ENCODE measurements at regions of chr14 and their contacts with region 1.

Region 1: DNA sequence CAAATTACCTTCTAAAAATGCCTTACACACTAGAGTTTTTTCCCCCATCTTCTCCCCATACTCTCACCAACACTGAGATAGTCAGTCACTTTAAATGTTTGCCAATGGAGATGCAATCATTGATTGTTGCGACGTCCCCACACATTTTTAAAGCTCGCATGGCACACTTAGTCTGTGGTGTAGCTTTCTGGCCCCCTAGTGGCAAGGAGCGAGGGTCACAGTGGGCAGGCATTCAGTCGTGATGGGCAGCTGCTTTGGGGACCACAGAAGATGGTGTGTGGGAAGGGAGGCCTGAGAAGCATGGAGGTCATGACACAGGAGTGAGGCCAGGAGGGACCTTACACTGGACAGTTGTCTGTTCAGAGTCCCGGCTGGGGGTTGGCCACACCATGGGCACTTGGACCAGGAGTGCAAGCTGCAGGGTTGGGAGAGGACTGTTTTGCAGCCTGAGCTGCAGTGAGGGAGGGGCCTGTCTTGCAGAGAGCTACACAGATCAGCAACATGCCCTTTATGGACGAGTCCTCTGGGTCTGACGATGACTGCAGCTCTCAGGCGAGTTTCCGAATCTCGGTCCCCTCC is 28.7 kb downstream of the PIGH start:
- DNase-seq: peak; percentile 81
- CTCF ChIP-seq: peak; percentile 97

Region 2: DNA sequence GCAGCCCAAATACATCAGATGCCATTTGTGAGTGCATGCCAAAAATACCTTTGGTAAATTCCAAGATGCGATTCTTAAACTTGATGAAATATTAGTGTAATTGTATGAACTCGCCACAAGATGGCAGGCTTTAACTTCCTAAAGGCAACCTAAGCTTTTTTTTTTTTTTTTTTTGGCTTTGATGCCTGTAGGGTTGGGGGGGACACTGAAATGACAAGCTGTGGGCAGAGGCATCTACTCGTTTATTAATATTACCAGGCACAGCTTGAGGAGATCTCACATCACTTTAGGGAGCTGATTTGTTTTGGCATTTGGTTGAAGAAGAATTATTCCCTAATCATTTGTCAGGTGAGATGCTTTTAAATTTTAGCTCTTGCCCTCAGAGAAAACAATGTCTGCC is 1211.9 kb before region 1 on chr14:
- CTCF ChIA-PET with region 1: interaction called, 12 read pairs
- POLR2A ChIA-PET with region 1: no interaction called
- DNase-seq: peak; percentile 40
- CTCF ChIP-seq: peak; percentile 47

Region 3: DNA sequence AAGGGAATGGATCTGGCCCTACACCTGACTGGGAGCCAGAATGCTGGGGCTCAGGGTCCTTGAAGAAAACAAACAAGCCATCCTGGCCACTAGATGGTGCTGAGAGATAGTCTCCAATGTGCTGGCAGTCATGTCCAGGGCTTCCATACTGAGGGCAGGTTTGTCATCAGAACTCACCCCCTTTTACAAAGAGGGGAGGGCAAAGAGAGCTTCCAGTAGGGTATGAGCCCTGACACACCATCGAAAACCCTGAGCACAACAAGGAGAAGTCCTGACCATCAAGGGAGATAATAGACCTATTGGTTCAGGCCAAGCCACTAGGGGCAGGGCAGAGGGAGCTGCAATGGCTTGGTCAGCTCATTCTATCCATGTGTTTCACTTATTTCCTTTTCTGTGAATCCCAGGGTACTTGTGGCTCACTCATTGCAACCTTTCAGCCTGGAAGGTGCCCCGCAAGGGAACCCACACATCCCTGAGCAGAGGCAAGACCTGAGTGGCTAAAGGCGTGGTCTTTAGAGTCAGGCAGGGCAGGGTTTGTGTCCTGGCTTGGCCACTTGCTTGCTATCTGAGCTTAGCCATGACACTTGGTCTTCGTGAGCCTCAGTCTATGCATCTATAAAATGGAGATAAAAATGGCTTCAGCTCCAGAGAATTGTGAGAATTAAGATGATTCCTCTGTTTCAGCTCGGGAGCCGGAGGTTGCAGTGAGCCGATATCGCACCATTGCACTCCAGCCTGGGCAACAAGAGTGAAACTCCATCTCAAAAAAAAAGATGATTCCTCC is 44.5 kb before region 1 on chr14:
- CTCF ChIA-PET with region 1: interaction called, 38 read pairs
- POLR2A ChIA-PET with region 1: no interaction called
- DNase-seq: peak; percentile 53
- CTCF ChIP-seq: peak; percentile 53

Region 4: GRCh38 chr14:67557126-67557525 is 14.2 kb before region 1 on chr14:
- CTCF ChIA-PET with region 1: interaction called, 40 read pairs
- POLR2A ChIA-PET with region 1: no interaction called
- DNase-seq: no peak
- CTCF ChIP-seq: no peak

Region 5: DNA sequence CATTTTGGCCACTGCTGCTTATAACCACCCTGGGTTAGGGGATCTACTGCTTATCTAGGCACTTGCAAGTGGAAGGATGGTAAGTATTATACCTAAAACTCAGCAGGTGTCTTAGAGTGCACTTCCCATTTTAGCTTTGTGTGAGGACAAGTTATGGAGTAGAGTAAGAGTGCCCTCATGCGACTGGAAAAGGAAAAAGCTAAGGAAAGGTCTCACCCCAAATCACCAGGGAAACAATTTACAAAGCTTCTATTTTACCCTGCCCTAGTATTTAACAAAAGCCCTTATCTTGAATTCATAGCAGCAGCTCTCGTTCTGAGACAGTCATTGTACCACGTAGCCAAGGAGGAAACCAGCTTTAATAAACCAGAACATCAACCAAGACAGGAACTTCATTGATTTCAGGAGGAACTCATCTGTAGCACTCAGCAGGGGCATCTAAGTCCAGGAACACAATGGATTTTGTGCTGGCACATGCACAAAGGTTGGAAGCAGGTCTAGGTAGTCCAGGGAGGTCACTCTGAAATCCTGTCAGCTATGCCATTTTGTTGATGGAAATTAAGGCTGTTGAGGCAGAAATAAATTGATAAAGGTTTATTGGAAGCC is 133.2 kb after region 1 on chr14:
- CTCF ChIA-PET with region 1: interaction called, 313 read pairs
- POLR2A ChIA-PET with region 1: no interaction called
- DNase-seq: peak; percentile 67
- CTCF ChIP-seq: peak; percentile 72

Region 6: DNA sequence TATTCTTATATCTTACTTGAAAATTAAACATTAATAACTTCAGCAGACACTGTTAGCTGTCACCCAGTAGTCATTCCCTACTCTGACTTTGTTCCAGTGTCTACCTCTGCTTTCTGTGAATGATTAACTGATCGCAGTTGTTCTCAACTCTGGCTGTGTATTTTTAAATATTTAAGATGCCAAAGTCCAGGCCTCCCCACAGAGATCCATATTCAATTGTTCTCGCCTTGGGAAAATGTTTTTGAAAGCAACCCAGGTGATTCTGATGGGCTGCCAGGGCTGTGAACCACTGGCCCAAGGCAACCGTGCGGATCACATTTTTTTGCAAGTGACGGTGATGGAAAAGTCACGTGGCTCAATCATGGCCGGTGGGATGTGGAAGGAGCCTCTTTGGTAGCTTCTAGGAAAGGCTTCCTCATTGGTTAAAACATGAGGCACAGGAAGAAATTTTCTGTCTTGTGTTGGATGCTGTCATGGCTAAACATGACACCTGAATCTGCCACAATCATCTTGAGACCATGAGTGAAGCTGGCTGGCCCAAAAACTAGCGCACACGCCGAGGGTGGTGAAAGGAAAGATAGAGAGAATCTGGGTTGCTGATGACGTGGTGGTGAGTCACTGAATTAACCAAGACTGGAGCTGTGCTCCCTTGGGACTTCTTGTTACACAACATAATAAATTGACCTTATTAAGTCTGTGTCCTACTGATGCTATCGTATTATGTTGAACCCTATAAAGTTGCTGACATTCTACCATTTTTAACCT is 167.6 kb after region 1 on chr14:
- CTCF ChIA-PET with region 1: no interaction called
- POLR2A ChIA-PET with region 1: no interaction called
- DNase-seq: no peak
- CTCF ChIP-seq: no peak

Measured in GM10248 (cell line).